ENCODE measurements at regions of chr2 and their contacts with region 1.

Region 1: GRCh38 chr2:88874063-88874657 is 182.7 kb downstream of the RPIA start:
- DNase-seq: peak; percentile 60
- H3K4me3 Mint-ChIP-seq: no peak overlapping the region
- H3K27ac Mint-ChIP-seq: no peak overlapping the region
- H3K4me1 Mint-ChIP-seq: no peaks in the 10 kb centered on the region
- H3K27me3 Mint-ChIP-seq: peaks cover 48% of the 10 kb centered on the region
- CTCF ChIP-seq: no peak

Region 2: DNA sequence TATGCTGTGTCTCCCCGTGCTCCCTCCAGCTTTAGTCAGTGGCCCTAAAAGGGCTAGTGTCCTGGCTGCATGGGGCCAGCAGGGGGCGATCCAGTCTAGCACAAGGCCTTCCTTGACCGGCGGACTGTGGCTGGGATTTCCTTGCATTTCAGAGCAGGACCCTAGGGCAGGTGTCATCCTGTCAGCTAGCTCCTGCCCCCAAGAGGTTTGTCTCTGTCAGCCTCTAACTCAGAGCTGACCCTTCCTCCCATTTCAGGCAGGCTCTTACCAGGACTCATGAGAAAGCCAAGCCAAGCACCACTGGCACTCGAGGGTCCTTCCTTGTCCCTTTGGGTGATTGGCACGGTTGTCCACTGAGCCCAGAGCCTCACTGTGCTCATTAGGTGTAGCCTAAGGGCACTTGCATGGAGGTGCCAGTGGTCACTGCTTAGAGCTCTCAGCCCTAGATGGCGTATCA is 42.3 kb before region 1 on chr2:
- CTCF ChIA-PET with region 1: no interaction called
- intact Hi-C with region 1: loop called (anchors 5 kb)
- DNase-seq: peak; percentile 77
- H3K4me3 Mint-ChIP-seq: no peak overlapping the region
- H3K27ac Mint-ChIP-seq: no peak overlapping the region
- H3K4me1 Mint-ChIP-seq: no peaks in the 10 kb centered on the region
- H3K27me3 Mint-ChIP-seq: peaks cover 28% of the 10 kb centered on the region
- CTCF ChIP-seq: peak; percentile 75

Measured in Calu3 (cell line).